ENCODE measurements at regions of chr1 and their contacts with region 1.

Region 1: GRCh38 chr1:239413916-239414315 is 27.5 kb downstream of the CHRM3 start:
- DNase-seq: no peak
- ATAC-seq: no peak
- H3K4me3 ChIP-seq: no peak overlapping the region
- H3K27ac ChIP-seq: no peak overlapping the region
- H3K4me1 ChIP-seq: no peaks in the 10 kb centered on the region
- H3K27me3 ChIP-seq: no peaks in the 10 kb centered on the region
- CTCF ChIP-seq: no peak
- POLR2A ChIP-seq: no peak

Region 2: GRCh38 chr1:239098400-239099037 is 315.4 kb before region 1 on chr1:
- intact Hi-C with region 1: no loop called
- DNase-seq: no peak
- ATAC-seq: peak in 1 of 4 donors; percentile 42
- H3K4me3 ChIP-seq: no peak overlapping the region
- H3K27ac ChIP-seq: no peak overlapping the region
- H3K4me1 ChIP-seq: no peaks in the 10 kb centered on the region
- H3K27me3 ChIP-seq: no peaks in the 10 kb centered on the region
- CTCF ChIP-seq: no peak
- POLR2A ChIP-seq: no peak

Region 3: DNA sequence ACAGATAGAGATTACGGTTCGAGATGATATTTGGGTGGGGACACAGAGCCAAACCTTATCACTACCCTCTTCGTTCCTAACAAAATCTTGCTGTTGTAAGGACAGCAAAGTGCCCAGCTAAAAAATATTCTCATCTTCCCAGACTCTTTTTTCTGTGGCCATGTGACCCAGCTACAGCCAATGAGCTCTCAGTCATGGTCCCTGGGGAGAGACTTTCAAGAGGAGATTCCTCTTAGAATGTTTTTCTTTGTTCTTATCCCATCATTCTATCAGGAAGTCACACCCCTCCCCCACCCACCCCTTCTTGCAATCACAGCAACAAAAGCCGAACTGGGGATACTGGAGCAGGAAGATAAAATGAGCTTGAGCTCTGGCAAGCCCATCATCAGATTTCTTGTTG is 219.5 kb after region 1 on chr1:
- intact Hi-C with region 1: no loop called
- DNase-seq: no peak
- ATAC-seq: no peak
- H3K4me3 ChIP-seq: no peak overlapping the region
- H3K27ac ChIP-seq: no peak overlapping the region
- H3K4me1 ChIP-seq: no peaks in the 10 kb centered on the region
- H3K27me3 ChIP-seq: no peaks in the 10 kb centered on the region
- CTCF ChIP-seq: no peak
- POLR2A ChIP-seq: no peak

Region 4: GRCh38 chr1:239898062-239898730 is 484.3 kb after region 1 on chr1:
- intact Hi-C with region 1: loop called in 1 of 2 experiments (anchors 10 kb)
- DNase-seq: peak; percentile 77 to 79 (median 78)
- ATAC-seq: peak; percentile 99 to 100 (median 100)
- H3K4me3 ChIP-seq: no peak overlapping the region
- H3K27ac ChIP-seq: no peak overlapping the region
- H3K4me1 ChIP-seq: peaks cover 0 to 6% (median 1%) of the 10 kb centered on the region in 4 donors
- H3K27me3 ChIP-seq: no peaks in the 10 kb centered on the region
- CTCF ChIP-seq: peak; percentile 90 to 94 (median 92)
- POLR2A ChIP-seq: no peak